ENCODE measurements at regions of chr20 and their contacts with region 1.

Region 1: DNA sequence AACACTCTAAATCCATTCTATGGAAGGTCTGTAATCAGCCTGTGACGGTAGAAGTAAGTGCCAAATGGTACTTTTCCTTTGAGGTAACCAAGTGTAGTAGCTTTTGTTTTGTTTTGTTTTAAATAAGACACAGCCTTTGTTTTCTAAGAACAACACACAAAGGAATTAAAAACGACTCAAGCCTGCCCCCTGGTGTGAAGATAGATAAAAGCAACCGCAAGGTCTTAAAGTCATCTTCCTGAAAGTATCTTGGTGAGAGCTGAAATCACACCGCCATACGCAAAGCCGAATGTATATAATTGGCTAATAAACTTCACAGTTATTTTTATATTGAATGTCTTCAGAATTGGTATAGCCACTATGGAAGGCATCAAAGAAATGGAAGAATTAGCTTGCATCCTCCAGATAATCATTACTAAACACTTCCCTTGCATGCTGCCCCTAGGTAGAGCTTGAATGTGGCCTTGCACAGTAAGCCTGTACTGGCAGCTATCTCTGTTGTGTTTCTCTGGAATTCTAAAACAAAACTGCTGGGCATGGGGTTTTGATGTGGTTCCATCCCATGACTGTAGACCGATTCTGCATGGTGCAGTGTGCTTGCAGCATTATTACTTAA is 95.6 kb downstream of the LAMP5 start:
- DNase-seq: no peak
- H3K4me3 ChIP-seq: no peak overlapping the region
- H3K27ac ChIP-seq: no peak overlapping the region
- H3K4me1 ChIP-seq: no peaks in the 10 kb centered on the region
- H3K27me3 ChIP-seq: no peaks in the 10 kb centered on the region
- CTCF ChIP-seq: peak; percentile 27 to 74 (median 64)
- POLR2A ChIP-seq: no peak

Region 2: GRCh38 chr20:9407805-9408421 is 202.1 kb before region 1 on chr20:
- intact Hi-C with region 1: loop called (anchors 5 kb)
- DNase-seq: no peak
- H3K4me3 ChIP-seq: no peak overlapping the region
- H3K27ac ChIP-seq: no peak overlapping the region
- H3K4me1 ChIP-seq: no peaks in the 10 kb centered on the region
- H3K27me3 ChIP-seq: no peaks in the 10 kb centered on the region
- CTCF ChIP-seq: peak; percentile 33 to 83 (median 77)
- POLR2A ChIP-seq: no peak

Region 3: DNA sequence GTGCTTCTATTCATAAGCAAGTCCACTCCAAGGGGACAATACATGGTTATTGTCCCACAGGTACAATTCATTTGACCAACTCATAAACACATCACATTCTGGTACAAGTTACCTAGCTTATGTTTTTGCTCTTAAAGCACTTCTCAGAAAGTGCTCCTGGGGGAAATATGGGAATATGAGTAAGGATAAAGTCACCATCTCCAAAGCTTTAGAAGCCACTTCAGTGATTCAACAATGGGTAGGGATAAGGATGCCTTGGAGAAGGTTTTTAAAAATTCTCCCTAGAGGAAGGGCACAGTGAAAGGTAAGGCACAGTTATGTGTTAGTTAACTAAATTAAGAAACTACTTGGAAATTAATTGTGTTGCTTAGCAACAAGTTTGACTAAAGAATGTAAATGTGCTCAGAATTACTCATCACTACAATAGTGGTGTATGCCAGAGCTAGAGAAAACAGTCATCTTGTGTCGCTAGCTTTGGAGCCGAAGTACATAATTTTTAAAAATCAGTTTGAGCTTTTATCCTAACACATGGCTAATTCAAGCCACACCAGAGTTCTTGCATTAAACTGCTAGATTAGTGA is 135.1 kb before region 1 on chr20:
- intact Hi-C with region 1: no loop called
- DNase-seq: no peak
- H3K4me3 ChIP-seq: no peak overlapping the region
- H3K27ac ChIP-seq: no peak overlapping the region
- H3K4me1 ChIP-seq: no peaks in the 10 kb centered on the region
- H3K27me3 ChIP-seq: no peaks in the 10 kb centered on the region
- CTCF ChIP-seq: no peak
- POLR2A ChIP-seq: no peak

Measured in esophagus squamous epithelium (tissue), 5 donors.